Naive thymus-derived CD4-positive, alpha-beta T cell (primary cell): ENCODE measurements at regions of chr22 and their contacts with region 1.

Region 1: DNA sequence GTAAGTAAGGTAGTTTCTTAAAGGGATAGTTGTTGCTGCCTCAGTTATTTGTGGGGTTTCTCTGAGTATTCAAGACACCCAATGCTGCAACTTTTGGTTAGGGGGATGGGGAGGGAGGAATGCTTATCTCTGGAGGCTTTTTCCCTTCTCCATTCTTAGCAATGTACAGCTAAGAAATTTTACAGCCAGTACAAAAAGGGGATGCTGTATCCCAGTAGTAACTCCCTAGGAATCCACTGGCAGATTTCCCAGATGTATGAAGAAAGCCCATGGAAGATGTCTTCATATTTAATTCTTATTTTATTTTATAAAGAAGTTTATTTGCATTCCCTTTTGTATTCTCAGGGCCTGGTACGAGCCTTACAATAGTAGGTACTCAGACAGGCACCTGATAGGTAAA is 154.8 kb downstream of the ENTHD1 start:
- DNase-seq: no peak
- ATAC-seq: no peak
- H3K4me3 ChIP-seq: no peak overlapping the region
- H3K4me3 Mint-ChIP-seq: no peak overlapping the region
- H3K27ac ChIP-seq: no peak overlapping the region
- H3K27ac Mint-ChIP-seq: no peak overlapping the region
- H3K4me1 ChIP-seq: no peaks in the 10 kb centered on the region
- H3K4me1 Mint-ChIP-seq: peaks cover 0 to 7% (median 0%) of the 10 kb centered on the region in 7 donors
- H3K27me3 ChIP-seq: no peaks in the 10 kb centered on the region
- H3K27me3 Mint-ChIP-seq: peaks cover 0 to 36% (median 5%) of the 10 kb centered on the region in 5 donors

Region 2: DNA sequence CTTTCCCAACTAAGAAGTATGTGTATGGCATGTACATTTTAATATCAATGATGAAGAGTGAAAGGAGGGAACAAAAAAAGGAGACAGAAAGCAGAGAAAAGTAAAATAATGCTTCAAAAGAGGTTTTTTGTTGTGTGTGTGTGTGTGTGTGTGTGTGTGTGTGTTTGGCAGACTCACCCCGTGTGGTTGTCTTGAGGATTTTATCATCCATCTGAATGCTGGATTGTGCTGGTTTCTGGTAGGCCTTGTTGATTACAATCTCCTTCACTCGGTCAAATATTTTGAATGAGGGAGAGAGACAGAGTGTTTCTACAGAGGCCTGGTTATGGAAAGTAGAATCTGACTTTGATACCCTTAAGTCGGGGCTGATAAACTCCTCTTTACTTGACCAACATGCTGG is 26.3 kb after region 1 on chr22:
- CTCF ChIA-PET with region 1: no interaction called
- POLR2A ChIA-PET with region 1: interaction called, 4 read pairs
- intact Hi-C with region 1: loop called in 1 of 2 experiments (anchors 1 kb)
- DNase-seq: no peak
- ATAC-seq: no peak
- H3K4me3 ChIP-seq: no peak overlapping the region
- H3K4me3 Mint-ChIP-seq: no peak overlapping the region
- H3K27ac ChIP-seq: no peak overlapping the region
- H3K27ac Mint-ChIP-seq: no peak overlapping the region
- H3K4me1 ChIP-seq: no peaks in the 10 kb centered on the region
- H3K4me1 Mint-ChIP-seq: peaks cover 0 to 12% (median 0%) of the 10 kb centered on the region in 7 donors
- H3K27me3 ChIP-seq: no peaks in the 10 kb centered on the region
- H3K27me3 Mint-ChIP-seq: peaks cover 0 to 11% (median 0%) of the 10 kb centered on the region in 5 donors

Region 3: DNA sequence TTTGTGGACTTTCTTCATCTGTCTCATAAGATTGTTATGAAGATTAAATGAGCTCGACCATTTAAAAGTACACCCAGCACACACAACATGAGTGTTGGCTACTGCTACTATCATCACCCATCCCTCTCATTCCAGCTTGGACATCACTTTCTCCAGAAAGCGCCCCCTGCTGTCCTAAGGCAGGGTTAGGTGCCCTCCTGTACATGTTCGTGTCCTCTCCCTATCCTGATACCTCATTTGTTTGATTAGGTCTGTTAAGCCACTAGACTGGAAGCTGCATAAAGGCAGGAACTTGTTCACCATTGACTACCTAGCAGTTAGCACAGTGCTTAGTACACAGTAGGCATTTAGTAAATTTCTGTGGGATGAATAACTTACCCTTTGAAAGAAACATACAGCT is 69.3 kb after region 1 on chr22:
- CTCF ChIA-PET with region 1: no interaction called
- POLR2A ChIA-PET with region 1: no interaction called
- intact Hi-C with region 1: loop called in 1 of 2 experiments (anchors 10 kb)
- DNase-seq: no peak
- ATAC-seq: no peak
- H3K4me3 ChIP-seq: no peak overlapping the region
- H3K4me3 Mint-ChIP-seq: no peak overlapping the region
- H3K27ac ChIP-seq: no peak overlapping the region
- H3K27ac Mint-ChIP-seq: no peak overlapping the region
- H3K4me1 ChIP-seq: peaks cover 0 to 4% of the 10 kb centered on the region in 2 donors
- H3K4me1 Mint-ChIP-seq: peaks cover 22 to 32% (median 27%) of the 10 kb centered on the region in 7 donors
- H3K27me3 ChIP-seq: no peaks in the 10 kb centered on the region
- H3K27me3 Mint-ChIP-seq: peaks cover 0 to 17% (median 4%) of the 10 kb centered on the region in 5 donors